IMR-90 (cell line): ENCODE measurements at regions of chr1 and their contacts with region 1.

Region 1: DNA sequence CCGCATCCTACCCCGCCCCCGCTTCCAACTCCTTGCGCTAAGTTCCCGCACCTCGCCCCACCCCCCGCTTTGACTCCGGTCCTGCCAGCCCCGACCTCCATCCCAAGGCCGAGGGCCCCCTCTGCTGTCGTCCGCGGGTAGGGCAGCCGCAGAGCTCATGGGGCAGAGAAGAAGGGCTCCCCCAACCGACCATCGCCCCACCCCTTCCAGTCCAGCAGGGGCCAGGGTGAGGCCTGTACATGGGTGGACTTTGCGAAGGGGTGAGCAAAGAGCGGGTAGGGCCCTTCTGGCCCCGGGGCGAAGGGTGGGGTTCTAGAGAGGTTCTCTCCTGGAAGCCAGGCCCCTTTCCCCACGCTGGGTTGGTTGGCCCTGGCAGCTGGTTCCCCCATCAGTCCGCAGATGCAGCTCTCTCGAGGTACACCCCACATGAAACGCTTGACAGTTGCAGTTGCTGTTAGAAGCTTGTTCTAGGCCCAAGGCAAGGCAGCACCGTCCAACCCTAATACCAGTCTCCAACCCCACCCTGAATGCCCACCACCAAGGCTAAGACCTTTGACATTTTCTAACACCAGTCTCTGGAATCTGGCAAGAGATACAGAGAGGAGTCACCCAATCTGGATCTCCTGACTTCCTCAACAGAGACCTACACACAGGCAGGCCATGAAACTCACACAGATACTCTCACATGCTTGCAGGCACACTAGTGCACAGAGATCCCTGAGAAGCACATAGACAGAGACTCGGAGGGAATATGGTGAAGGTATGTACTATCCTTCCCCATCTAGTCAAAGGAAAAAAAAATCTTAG is 25.3 kb upstream of the ADGRB2 start:
- DNase-seq: peak; percentile 82
- ATAC-seq: peak; percentile 83
- H3K4me3 ChIP-seq: peak overlapping the region; percentile 60
- H3K27ac ChIP-seq: peak overlapping the region; percentile 31
- H3K4me1 ChIP-seq: peaks cover 4% of the 10 kb centered on the region
- H3K27me3 ChIP-seq: no peaks in the 10 kb centered on the region
- CTCF ChIP-seq: peak; percentile 97
- POLR2A ChIP-seq: no peak
- RAD21 ChIP-seq: peak; percentile 96

Region 2: DNA sequence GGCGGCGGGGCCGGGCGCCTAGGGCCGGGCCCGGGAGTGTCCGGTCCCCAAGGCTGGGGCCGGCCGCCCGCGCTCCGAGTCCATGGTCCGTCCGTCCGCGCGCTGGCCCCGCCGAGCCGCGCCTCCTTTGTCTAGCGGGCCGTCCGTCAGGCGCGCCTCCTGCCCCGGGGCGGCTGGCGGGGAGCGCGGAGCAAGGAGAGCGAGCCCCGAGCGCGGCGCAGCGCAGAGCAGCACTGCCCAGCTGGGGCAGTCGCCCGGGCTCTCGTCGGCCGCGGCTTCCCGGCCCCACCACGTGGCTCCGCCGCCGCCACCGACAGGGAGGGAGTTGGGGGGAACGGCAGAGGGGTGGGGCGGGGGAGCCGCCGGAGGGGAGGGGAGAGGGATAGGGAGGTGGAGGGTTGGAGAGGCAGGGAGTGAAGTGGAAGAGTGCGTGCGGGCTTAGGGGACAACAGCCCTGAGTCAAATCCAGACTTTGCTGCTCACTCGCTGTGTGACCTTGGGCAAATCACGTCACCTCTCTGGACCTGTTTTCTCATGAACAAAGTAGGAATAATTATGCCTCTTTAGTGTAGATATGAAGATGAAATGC is 549.7 kb before region 1 on chr1 and contains the start of gene NKAIN1:
- CTCF ChIA-PET with region 1: no interaction called
- POLR2A ChIA-PET with region 1: no interaction called
- dilution Hi-C with region 1: no loop called
- in situ Hi-C with region 1: no loop called
- intact Hi-C with region 1: no loop called
- DNase-seq: peak; percentile 18
- ATAC-seq: peak; percentile 89
- H3K4me3 ChIP-seq: peak within 1 kb of the TSS; percentile 4; the same call in 1 of the 2 replicates
- H3K27ac ChIP-seq: no peak within 1 kb of the TSS
- H3K4me1 ChIP-seq: no peaks in the 10 kb centered on the region
- H3K27me3 ChIP-seq: peaks cover 57% of the 10 kb centered on the region
- CTCF ChIP-seq: no peak
- POLR2A ChIP-seq: no peak
- RAD21 ChIP-seq: no peak
- total RNA-seq, gene NKAIN1: under 0.01 TPM in 2 replicates

Region 3: GRCh38 chr1:31434171-31434871 is 355.1 kb before region 1 on chr1:
- CTCF ChIA-PET with region 1: no interaction called
- POLR2A ChIA-PET with region 1: no interaction called
- dilution Hi-C with region 1: no loop called
- in situ Hi-C with region 1: no loop called
- intact Hi-C with region 1: loop called (anchors 10 kb)
- DNase-seq: no peak
- ATAC-seq: 0 out of 2 replicates have a peak, but pooled peaks have one; percentile 3
- H3K4me3 ChIP-seq: no peak overlapping the region
- H3K27ac ChIP-seq: no peak overlapping the region
- H3K4me1 ChIP-seq: no peaks in the 10 kb centered on the region
- H3K27me3 ChIP-seq: peaks cover under 1% of the 10 kb centered on the region; the same call in 1 of the 2 replicates
- CTCF ChIP-seq: no peak
- POLR2A ChIP-seq: no peak
- RAD21 ChIP-seq: no peak

Region 4: DNA sequence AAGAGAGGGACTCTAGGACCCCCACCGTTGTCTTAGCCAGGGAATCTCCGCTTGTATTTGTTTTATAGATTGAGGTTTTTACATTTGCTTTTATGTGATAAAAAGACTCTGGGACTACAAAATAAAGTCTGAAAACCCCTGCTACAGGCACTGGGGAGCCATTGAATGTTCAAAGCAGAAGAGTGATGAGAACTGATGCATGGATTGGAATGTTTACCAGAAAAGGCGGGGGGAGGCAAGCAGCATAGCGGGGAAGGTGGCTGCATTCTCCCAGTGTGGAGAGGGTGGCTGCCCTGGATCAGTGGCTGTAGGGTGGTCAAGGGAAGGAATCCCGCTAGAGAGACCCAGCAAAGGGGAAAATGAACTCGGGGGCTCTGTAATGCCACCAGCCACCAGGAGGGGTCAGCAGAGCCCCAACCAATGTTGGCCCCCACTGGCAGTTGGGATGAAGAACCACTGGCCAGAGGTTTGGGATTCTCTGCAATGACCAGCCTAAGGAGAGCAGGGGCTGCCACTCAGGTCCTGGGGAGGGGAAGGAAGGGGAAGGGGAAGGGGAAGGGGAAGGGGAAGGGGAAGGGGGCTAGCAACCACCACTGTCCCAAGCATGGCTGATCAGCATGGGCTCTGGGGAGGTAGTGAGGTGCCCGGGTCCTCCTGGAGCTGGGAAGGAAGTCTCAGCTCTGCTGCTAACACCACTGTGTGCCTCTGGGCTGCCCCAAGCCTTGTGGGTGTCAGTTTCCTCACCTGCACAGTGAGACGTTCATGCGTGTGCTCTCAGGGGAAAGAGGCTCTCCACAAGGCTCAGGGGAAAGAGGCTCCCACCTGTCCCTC is 125.6 kb before region 1 on chr1:
- CTCF ChIA-PET with region 1: interaction called, 5 read pairs
- POLR2A ChIA-PET with region 1: no interaction called
- dilution Hi-C with region 1: no loop called
- in situ Hi-C with region 1: loop called (anchors 5 kb)
- intact Hi-C with region 1: loop called (anchors 1 kb)
- DNase-seq: peak; percentile 22
- ATAC-seq: peak; percentile 84
- H3K4me3 ChIP-seq: no peak overlapping the region
- H3K27ac ChIP-seq: no peak overlapping the region
- H3K4me1 ChIP-seq: peaks cover 3% of the 10 kb centered on the region
- H3K27me3 ChIP-seq: no peaks in the 10 kb centered on the region
- CTCF ChIP-seq: peak; percentile 95
- POLR2A ChIP-seq: peak; percentile 21; the same call in 1 of the 2 replicates
- RAD21 ChIP-seq: peak; percentile 96

Region 5: DNA sequence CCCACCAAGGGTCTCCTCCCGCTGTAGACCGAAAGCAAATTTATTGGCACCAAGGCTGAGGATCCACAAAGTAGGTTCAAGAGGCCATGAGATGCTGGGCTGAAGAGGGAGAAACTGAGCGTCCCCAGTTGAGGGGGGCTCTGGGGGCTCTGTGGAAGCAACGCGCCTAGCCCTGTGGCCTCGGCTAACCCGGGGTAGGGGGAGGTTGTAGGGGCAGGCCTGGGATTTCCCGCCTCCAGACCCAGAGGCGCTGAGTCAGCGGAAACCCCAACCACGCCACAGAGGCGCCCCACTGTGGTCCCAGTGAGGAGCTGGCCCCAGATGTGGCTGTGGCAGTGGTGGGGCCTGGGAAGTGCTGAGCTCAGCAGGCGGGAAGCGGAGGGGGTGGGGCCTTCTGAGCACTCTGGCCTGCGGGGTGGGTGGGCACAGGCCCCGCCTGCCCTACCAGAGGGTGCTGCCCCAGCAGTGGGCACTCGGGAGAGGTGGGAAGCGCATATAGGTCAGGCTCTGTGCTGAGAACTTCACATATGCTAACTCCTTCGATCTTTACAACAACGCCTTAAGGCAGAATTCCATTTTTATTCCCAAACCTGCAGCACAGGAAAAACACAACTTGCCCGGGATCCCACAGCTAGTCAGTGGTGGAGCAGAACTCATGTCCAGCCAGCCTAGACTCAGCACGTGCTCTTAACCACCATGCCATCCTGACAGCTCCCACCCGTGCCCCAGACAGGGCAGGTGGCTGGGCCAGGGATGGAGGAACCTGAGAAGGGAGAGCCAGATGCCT is 84.2 kb before region 1 on chr1:
- CTCF ChIA-PET with region 1: interaction called, 5 read pairs
- POLR2A ChIA-PET with region 1: no interaction called
- dilution Hi-C with region 1: no loop called
- in situ Hi-C with region 1: no loop called
- intact Hi-C with region 1: loop called (anchors 2 kb)
- DNase-seq: peak; percentile 55
- ATAC-seq: peak; percentile 13
- H3K4me3 ChIP-seq: no peak overlapping the region
- H3K27ac ChIP-seq: peak overlapping the region; percentile 83
- H3K4me1 ChIP-seq: peaks cover 41% of the 10 kb centered on the region
- H3K27me3 ChIP-seq: no peaks in the 10 kb centered on the region
- CTCF ChIP-seq: peak; percentile 60
- POLR2A ChIP-seq: no peak
- RAD21 ChIP-seq: peak; percentile 71

Region 6: GRCh38 chr1:31715087-31715872 is 74.2 kb before region 1 on chr1:
- CTCF ChIA-PET with region 1: interaction called, 4 read pairs
- POLR2A ChIA-PET with region 1: no interaction called
- dilution Hi-C with region 1: no loop called
- in situ Hi-C with region 1: no loop called
- intact Hi-C with region 1: loop called (anchors 2 kb)
- DNase-seq: peak; percentile 81
- ATAC-seq: peak; percentile 90
- H3K4me3 ChIP-seq: peak overlapping the region; percentile 14
- H3K27ac ChIP-seq: peak overlapping the region; percentile 69
- H3K4me1 ChIP-seq: peaks cover 32% of the 10 kb centered on the region
- H3K27me3 ChIP-seq: peaks cover 4% of the 10 kb centered on the region; the same call in 1 of the 2 replicates
- CTCF ChIP-seq: peak; percentile 83
- POLR2A ChIP-seq: no peak; the same call in 1 of the 2 replicates
- RAD21 ChIP-seq: peak; percentile 55

Region 7: GRCh38 chr1:31762726-31763670 is 26.5 kb before region 1 on chr1:
- CTCF ChIA-PET with region 1: interaction called, 7 read pairs
- POLR2A ChIA-PET with region 1: interaction called, 3 read pairs
- dilution Hi-C with region 1: no loop called
- in situ Hi-C with region 1: no loop called
- intact Hi-C with region 1: loop called (anchors 2 kb)
- DNase-seq: peak; percentile 27
- ATAC-seq: peak; percentile 40
- H3K4me3 ChIP-seq: peak overlapping the region; percentile 47
- H3K27ac ChIP-seq: no peak overlapping the region
- H3K4me1 ChIP-seq: peaks cover 21% of the 10 kb centered on the region
- H3K27me3 ChIP-seq: peaks cover 7% of the 10 kb centered on the region
- CTCF ChIP-seq: peak; percentile 71
- POLR2A ChIP-seq: no peak
- RAD21 ChIP-seq: peak; percentile 56

Region 8: DNA sequence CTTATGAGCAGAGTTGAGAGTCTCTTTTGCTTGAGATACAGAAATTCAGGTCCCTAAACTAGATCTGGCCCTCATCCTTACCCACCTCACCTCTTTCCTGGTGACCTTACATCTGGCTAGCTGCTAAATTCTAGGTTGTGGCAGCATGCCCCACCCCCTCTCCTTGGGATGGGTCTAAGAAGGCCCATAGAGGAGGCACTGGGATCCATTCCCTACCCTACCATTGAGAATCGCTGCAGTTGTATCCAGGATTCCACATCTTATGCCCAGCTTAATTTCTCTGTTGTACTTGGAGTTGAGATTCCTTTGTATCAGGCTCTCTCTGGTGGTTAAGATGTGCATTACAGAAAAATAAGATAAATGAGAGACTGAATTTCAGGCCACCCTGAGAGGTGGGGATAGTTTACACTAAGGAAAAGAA is 273.8 kb after region 1 on chr1:
- CTCF ChIA-PET with region 1: no interaction called
- POLR2A ChIA-PET with region 1: no interaction called
- dilution Hi-C with region 1: no loop called
- in situ Hi-C with region 1: no loop called
- intact Hi-C with region 1: loop called (anchors 10 kb)
- DNase-seq: peak; percentile 76
- ATAC-seq: peak; percentile 64
- H3K4me3 ChIP-seq: no peak overlapping the region
- H3K27ac ChIP-seq: peak overlapping the region; percentile 60
- H3K4me1 ChIP-seq: peaks cover 14% of the 10 kb centered on the region
- H3K27me3 ChIP-seq: no peaks in the 10 kb centered on the region
- CTCF ChIP-seq: peak; percentile 70
- POLR2A ChIP-seq: no peak
- RAD21 ChIP-seq: peak; percentile 78